ENCODE measurements at regions of chr6 and their contacts with region 1.

Region 1: DNA sequence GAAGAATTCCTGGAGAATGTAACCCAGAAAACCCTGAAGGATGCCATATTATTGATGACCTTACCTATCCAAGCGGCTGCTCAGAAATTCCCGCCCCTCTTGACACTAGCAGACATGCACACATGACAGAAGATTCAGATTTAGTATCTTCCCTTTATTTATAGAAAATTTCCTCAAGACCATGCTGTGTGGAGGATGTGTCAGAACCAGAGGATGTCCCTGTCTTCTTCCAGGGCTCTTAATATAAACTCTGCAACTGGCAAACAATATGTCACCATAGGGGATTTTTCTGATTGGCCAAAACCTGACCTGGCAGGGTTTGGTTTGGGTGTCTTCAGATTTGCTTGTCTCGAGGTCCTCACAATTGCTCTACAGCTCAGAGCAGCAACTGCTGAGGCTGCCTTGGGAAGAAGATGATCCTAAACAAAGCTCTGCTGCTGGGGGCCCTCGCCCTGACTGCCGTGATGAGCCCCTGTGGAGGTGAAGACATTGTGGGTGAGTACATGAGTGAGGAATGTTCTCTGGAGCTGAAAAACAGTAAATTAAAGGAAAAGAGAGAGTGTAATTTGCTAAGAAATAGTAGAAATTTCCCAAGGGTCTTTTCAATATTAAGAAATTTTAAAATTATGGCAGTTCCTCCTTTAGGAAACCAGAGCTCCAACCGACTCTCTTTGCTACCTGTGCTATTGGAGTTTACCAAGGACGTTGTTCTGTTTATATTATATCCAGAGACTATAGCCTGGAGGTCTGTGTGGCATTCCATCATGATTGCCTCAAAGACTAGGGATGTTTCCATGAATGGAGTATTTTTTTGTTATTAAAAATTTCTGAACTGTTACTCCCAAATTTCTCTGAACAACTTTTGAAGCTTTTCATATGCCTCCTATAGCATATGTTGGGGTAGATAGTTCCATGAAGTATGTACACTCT is at the start of gene HLA-DQA2:
- DNase-seq: peak in 2 of 3 donors; percentile 43 to 45
- H3K4me3 ChIP-seq: no peak within 1 kb of the TSS
- H3K4me3 Mint-ChIP-seq: peak within 1 kb of the TSS in 1 of 2 donors; percentile 56
- H3K27ac ChIP-seq: no peak within 1 kb of the TSS
- H3K27ac Mint-ChIP-seq: peak within 1 kb of the TSS in 2 of 7 donors; percentile 61 to 79
- H3K4me1 ChIP-seq: no peaks in the 10 kb centered on the region
- H3K4me1 Mint-ChIP-seq: peaks cover 3% of the 10 kb centered on the region
- H3K27me3 ChIP-seq: peaks cover 0 to 6% of the 10 kb centered on the region in 2 donors
- H3K27me3 Mint-ChIP-seq: peaks cover 3 to 19% (median 7%) of the 10 kb centered on the region in 3 donors
- CTCF ChIP-seq: no peak
- polyA plus RNA-seq, gene HLA-DQA2: 0.24 to 53.5 (median 15.5) TPM

Region 2: GRCh38 chr6:32638532-32639219 is 102.6 kb before region 1 on chr6:
- intact Hi-C with region 1: loop called (anchors 2 to 5 kb)
- DNase-seq: peak in 1 of 3 donors; percentile 14
- H3K4me3 ChIP-seq: peak overlapping the region in 1 of 3 experiments; percentile 68
- H3K4me3 Mint-ChIP-seq: peak overlapping the region; percentile 85 to 94
- H3K27ac ChIP-seq: peak overlapping the region in 1 of 2 donors; percentile 74
- H3K27ac Mint-ChIP-seq: peak overlapping the region; percentile 68 to 99 (median 93)
- H3K4me1 ChIP-seq: no peaks in the 10 kb centered on the region
- H3K4me1 Mint-ChIP-seq: peaks cover 44% of the 10 kb centered on the region
- H3K27me3 ChIP-seq: no peaks in the 10 kb centered on the region
- H3K27me3 Mint-ChIP-seq: peaks cover 2 to 11% (median 7%) of the 10 kb centered on the region in 3 donors
- CTCF ChIP-seq: no peak